ENCODE measurements at regions of chr18 and their contacts with region 1.

Region 1: DNA sequence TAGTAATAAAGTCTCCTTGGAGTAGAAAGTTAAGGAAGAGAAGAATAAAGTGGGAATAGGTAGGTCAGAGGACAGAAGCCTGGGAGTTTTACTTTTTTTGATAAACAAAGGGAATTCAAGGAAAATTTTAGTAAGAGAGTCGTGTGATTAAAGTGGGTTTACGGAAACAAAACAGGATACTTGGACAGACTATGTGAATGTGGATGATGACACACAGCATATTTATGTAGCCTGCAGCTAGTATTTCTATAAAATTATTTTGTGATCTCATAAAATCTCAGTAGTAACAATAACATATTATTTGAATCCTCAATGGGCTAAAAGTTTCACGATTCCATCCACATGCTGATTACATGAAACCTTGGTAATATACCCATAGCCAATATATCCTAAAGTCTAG is 450.7 kb upstream of the PIK3C3 start:
- DNase-seq: no peak
- ATAC-seq: no peak
- H3K4me3 ChIP-seq: no peak overlapping the region
- H3K27ac ChIP-seq: no peak overlapping the region
- H3K4me1 ChIP-seq: no peaks in the 10 kb centered on the region
- H3K27me3 ChIP-seq: no peaks in the 10 kb centered on the region
- CTCF ChIP-seq: no peak

Region 2: GRCh38 chr18:41569867-41570266 is 65.6 kb after region 1 on chr18:
- intact Hi-C with region 1: loop called in 1 of 2 experiments (anchors 10 kb)
- DNase-seq: no peak
- ATAC-seq: no peak
- H3K4me3 ChIP-seq: no peak overlapping the region
- H3K27ac ChIP-seq: no peak overlapping the region
- H3K4me1 ChIP-seq: no peaks in the 10 kb centered on the region
- H3K27me3 ChIP-seq: no peaks in the 10 kb centered on the region
- CTCF ChIP-seq: no peak

Region 3: GRCh38 chr18:41642756-41643155 is 138.4 kb after region 1 on chr18:
- intact Hi-C with region 1: no loop called
- DNase-seq: no peak
- ATAC-seq: no peak
- H3K4me3 ChIP-seq: no peak overlapping the region
- H3K27ac ChIP-seq: no peak overlapping the region
- H3K4me1 ChIP-seq: no peaks in the 10 kb centered on the region
- H3K27me3 ChIP-seq: no peaks in the 10 kb centered on the region
- CTCF ChIP-seq: no peak

Region 4: GRCh38 chr18:42446195-42446594 is 941.9 kb after region 1 on chr18:
- intact Hi-C with region 1: loop called in 1 of 2 experiments (anchors 5 kb)
- DNase-seq: no peak
- ATAC-seq: no peak
- H3K4me3 ChIP-seq: no peak overlapping the region
- H3K27ac ChIP-seq: no peak overlapping the region
- H3K4me1 ChIP-seq: no peaks in the 10 kb centered on the region
- H3K27me3 ChIP-seq: no peaks in the 10 kb centered on the region
- CTCF ChIP-seq: no peak